ENCODE measurements at regions of chr13 and their contacts with region 1.

Region 1: DNA sequence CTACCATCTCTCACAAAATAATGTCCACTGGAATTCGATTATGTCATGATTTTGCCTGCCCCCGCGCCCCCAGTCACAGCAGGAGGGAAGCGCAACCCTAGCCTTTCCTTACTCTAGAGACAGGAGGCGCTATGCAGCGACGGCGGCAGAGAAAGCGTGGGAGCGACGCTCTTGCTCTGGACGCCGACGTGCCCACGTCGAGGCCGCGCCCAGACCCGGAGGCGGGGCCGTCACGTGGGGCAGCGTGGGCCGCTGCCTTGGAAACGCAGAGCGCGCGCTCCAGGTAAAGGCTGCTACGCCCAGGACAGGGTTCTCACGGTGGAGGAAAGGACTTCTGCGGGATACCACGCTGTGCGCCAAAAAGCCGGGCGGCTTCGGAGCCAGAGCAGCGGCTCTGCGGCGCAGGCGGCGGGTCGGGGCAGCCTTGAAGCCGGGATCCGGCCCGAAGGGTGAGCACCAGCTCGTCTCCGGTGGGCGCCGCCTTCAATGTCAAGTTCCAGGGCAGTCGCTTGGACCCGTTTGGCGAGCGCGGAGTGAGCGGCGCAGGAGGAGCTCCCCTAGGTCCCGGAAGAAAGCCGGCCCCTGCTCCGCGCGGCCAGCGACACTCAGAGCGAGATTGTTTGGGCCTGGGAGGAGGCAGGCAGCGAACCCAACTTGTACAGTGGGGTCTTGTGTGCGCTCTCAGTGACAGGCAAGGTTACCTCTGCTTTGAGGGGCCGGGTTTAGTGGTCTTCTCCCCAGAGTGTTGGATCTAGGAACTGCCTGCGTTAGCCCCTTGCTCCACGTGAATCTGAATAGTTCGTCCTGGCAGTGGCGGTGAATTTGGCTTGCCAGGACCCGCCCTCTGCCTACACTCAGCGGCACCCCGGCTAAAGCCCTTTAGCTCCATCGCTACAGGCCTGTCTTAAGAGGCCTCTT is 121.7 kb downstream of the MRPL57 start:
- DNase-seq: peak; percentile 93
- ATAC-seq: peak; percentile 96
- H3K4me3 ChIP-seq: peak overlapping the region; percentile 8 to 88 (median 75)
- H3K4me3 Mint-ChIP-seq: peak overlapping the region; percentile 89
- H3K27ac ChIP-seq: peak overlapping the region; percentile 7 to 77
- H3K27ac Mint-ChIP-seq: peak overlapping the region; percentile 89
- H3K4me1 ChIP-seq: peaks cover 15 to 18% of the 10 kb centered on the region in 2 donors
- H3K4me1 Mint-ChIP-seq: peaks cover 17% of the 10 kb centered on the region
- H3K27me3 ChIP-seq: no peaks in the 10 kb centered on the region
- H3K27me3 Mint-ChIP-seq: no peaks in the 10 kb centered on the region
- CTCF ChIP-seq: peak; percentile 93

Region 2: GRCh38 chr13:21176220-21176982 is 121.8 kb before region 1 on chr13 and contains the starts of genes MRPL57 and SKA3:
- CTCF ChIA-PET with region 1: interaction called, 25 read pairs
- POLR2A ChIA-PET with region 1: interaction called, 4 read pairs
- intact Hi-C with region 1: loop called (anchors 1 kb)
- DNase-seq: peak; percentile 95
- ATAC-seq: peak; percentile 93
- H3K4me3 ChIP-seq: peak within 1 kb of the TSS; percentile 67 to 97 (median 94)
- H3K4me3 Mint-ChIP-seq: peak within 1 kb of the TSS; percentile 98
- H3K27ac ChIP-seq: peak within 1 kb of the TSS; percentile 82 to 85
- H3K27ac Mint-ChIP-seq: peak within 1 kb of the TSS; percentile 97
- H3K4me1 ChIP-seq: peaks cover 11 to 15% of the 10 kb centered on the region in 2 donors
- H3K4me1 Mint-ChIP-seq: peaks cover 15% of the 10 kb centered on the region
- H3K27me3 ChIP-seq: no peaks in the 10 kb centered on the region
- H3K27me3 Mint-ChIP-seq: no peaks in the 10 kb centered on the region
- CTCF ChIP-seq: peak; percentile 22
- total RNA-seq, gene MRPL57: 9.7 and 12.1 TPM in 2 replicates
- total RNA-seq, gene SKA3: 0.20 and 0.53 TPM in 2 replicates

Measured in B cell (primary cell).